ENCODE measurements at regions of chr12 and their contacts with region 1.

Region 1: GRCh38 chr12:107884769-107885694 is 110.5 kb downstream of the ASCL4 start:
- DNase-seq: peak in 9 of 10 donors; percentile 44 to 72 (median 57)
- H3K4me3 ChIP-seq: no peak overlapping the region
- H3K27ac ChIP-seq: no peak overlapping the region
- H3K27me3 ChIP-seq: peaks cover 0 to 7% (median 0%) of the 10 kb centered on the region in 45 donors
- CTCF ChIP-seq: peak; percentile 39 to 83 (median 68)

Region 2: DNA sequence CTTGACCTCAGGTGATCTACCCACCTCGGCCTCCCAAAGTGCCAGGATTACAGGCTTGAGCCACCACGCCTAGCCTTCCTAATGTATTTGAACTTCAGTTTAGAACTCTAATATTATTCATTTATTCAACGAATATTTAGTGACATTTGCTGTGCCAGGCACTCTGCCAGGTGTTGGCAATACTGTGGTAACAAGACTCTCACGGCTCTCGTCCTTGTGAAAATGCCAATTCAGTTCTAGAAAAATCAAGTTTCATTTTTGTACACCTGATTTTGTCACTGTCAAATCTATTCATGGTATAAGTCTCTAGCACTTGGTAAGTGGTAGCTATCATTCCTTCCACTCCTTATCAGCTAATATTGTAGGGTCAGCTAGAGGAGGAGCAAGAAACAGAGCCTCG is 205.7 kb before region 1 on chr12:
- intact Hi-C with region 1: loop called in 1 of 2 experiments (anchors 2 kb)
- DNase-seq: no peak
- H3K4me3 ChIP-seq: no peak overlapping the region
- H3K27ac ChIP-seq: no peak overlapping the region
- H3K27me3 ChIP-seq: peaks cover 0 to 23% (median 0%) of the 10 kb centered on the region in 45 donors
- CTCF ChIP-seq: no peak

Region 3: GRCh38 chr12:107685360-107686248 is 199.4 kb before region 1 on chr12 and contains the start of gene PWP1:
- intact Hi-C with region 1: loop called in 1 of 2 experiments (anchors 10 kb)
- DNase-seq: peak; percentile 85 to 93 (median 92)
- H3K4me3 ChIP-seq: peak within 1 kb of the TSS; percentile 60 to 100 (median 93)
- H3K27ac ChIP-seq: peak within 1 kb of the TSS in 44 of 59 donors; percentile 7 to 92 (median 68)
- H3K27me3 ChIP-seq: peaks cover 0 to 7% (median 0%) of the 10 kb centered on the region in 45 donors
- CTCF ChIP-seq: peak in 38 of 56 donors; percentile 9 to 69 (median 36)
- total RNA-seq, gene PWP1: 14.2 to 42.9 (median 30.0) TPM

Region 4: GRCh38 chr12:107760809-107761501 is 124.1 kb before region 1 on chr12 and contains the start of gene PRDM4:
- intact Hi-C with region 1: loop called (anchors 2 to 10 kb)
- DNase-seq: peak; percentile 82 to 96 (median 92)
- H3K4me3 ChIP-seq: peak within 1 kb of the TSS; percentile 68 to 96 (median 85)
- H3K27ac ChIP-seq: peak within 1 kb of the TSS in 55 of 59 donors; percentile 2 to 88 (median 72)
- H3K27me3 ChIP-seq: no peaks in the 10 kb centered on the region
- CTCF ChIP-seq: peak in 53 of 56 donors; percentile 6 to 84 (median 50)
- total RNA-seq, gene PRDM4: 21.5 to 45.7 (median 32.4) TPM